Testis (tissue), 5 donors: ENCODE measurements at regions of chr21 and their contacts with region 1.

Region 1: GRCh38 chr21:43866260-43866629 is 1.2 kb downstream of the AGPAT3 start:
- DNase-seq: peak; percentile 78
- H3K4me3 ChIP-seq: peak overlapping the region; percentile 73 to 79
- H3K27ac ChIP-seq: peak overlapping the region; percentile 12 to 91
- H3K4me1 ChIP-seq: peaks cover 13% of the 10 kb centered on the region
- H3K27me3 ChIP-seq: no peaks in the 10 kb centered on the region
- CTCF ChIP-seq: no peak
- POLR2A ChIP-seq: no peak

Region 2: DNA sequence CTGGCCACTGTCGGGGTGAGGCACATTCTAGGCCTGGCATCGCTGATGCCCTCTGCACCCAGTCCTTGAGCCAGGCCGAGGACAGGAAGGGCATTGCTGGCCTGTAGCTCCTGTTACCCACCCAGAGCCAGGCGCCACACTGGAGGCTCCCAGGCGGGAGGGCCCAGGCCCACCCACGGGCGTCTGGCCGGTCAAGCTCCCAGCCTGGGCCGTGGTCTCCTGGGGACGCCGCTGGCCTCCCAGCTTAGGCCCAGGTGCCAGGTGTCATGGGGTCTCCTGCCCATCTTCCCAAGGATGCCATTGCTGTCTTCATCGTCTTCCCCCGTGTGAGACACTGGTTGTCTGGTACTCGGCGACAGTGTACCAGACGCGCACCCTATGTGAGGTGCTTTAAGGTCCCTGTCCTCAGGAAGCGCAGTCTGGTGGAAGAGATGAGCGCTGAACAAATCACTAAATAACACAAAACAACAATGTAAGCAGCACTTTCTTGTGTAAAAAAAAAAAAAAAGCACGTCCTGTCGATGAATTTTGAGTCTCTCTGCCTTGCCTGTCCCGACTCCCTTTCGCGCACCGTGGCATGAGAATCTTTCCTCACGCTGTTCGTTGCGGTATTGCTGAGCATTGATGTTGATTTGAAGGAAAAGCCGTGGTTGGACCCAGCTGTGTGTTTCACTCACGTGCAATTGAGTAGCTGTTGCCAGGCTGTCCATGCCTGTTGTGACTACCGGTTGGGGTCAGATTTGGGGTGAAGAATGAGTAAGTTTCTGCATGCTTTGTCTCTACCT is 118.9 kb after region 1 on chr21:
- intact Hi-C with region 1: loop called (anchors 10 kb)
- DNase-seq: no peak
- H3K4me3 ChIP-seq: no peak overlapping the region
- H3K27ac ChIP-seq: no peak overlapping the region
- H3K4me1 ChIP-seq: peaks cover 9% of the 10 kb centered on the region
- H3K27me3 ChIP-seq: no peaks in the 10 kb centered on the region
- CTCF ChIP-seq: no peak
- POLR2A ChIP-seq: no peak